ENCODE measurements at regions of chr12 and their contacts with region 1.

Region 1: GRCh38 chr12:63862214-63863107 is 18.0 kb downstream of the SRGAP1 start:
- DNase-seq: peak; percentile 76 to 83
- H3K4me3 ChIP-seq: no peak overlapping the region
- H3K4me3 Mint-ChIP-seq: peak overlapping the region; percentile 50
- H3K27ac Mint-ChIP-seq: peak overlapping the region; percentile 60
- H3K4me1 ChIP-seq: peaks cover 41% of the 10 kb centered on the region
- H3K4me1 Mint-ChIP-seq: peaks cover 14% of the 10 kb centered on the region
- H3K27me3 ChIP-seq: no peaks in the 10 kb centered on the region
- H3K27me3 Mint-ChIP-seq: no peaks in the 10 kb centered on the region
- CTCF ChIP-seq: no peak

Region 2: DNA sequence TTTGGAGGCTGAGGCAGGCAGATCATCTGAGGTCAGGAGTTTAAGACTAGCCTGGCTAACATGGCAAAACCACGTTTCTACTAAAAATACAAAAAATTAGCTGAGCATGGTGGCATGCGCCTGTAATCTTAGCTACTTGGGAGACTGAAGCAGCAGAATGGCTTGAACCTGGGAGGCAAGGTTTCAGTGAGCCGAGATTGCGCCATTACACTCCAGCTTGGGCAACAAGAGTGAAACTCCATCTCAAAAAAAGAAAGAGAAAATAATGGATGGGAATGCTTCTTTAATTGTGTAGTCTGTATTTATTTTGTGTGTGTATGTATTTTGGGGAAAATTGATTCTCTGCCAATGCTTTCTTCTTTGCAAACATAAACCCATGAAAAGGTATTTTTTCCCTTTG is 14.5 kb after region 1 on chr12:
- CTCF ChIA-PET with region 1: no interaction called
- POLR2A ChIA-PET with region 1: no interaction called
- intact Hi-C with region 1: loop called (anchors 1 kb)
- DNase-seq: no peak
- H3K4me3 ChIP-seq: no peak overlapping the region
- H3K4me3 Mint-ChIP-seq: no peak overlapping the region
- H3K27ac Mint-ChIP-seq: no peak overlapping the region
- H3K4me1 ChIP-seq: peaks cover 27% of the 10 kb centered on the region
- H3K4me1 Mint-ChIP-seq: peaks cover 18% of the 10 kb centered on the region
- H3K27me3 ChIP-seq: no peaks in the 10 kb centered on the region
- H3K27me3 Mint-ChIP-seq: no peaks in the 10 kb centered on the region
- CTCF ChIP-seq: no peak

Region 3: GRCh38 chr12:63917864-63918799 is 55.7 kb after region 1 on chr12:
- CTCF ChIA-PET with region 1: no interaction called
- POLR2A ChIA-PET with region 1: no interaction called
- intact Hi-C with region 1: loop called (anchors 1 kb)
- DNase-seq: peak; percentile 52 to 69
- H3K4me3 ChIP-seq: no peak overlapping the region
- H3K4me3 Mint-ChIP-seq: peak overlapping the region; percentile 8
- H3K27ac Mint-ChIP-seq: peak overlapping the region; percentile 77
- H3K4me1 ChIP-seq: peaks cover 74% of the 10 kb centered on the region
- H3K4me1 Mint-ChIP-seq: peaks cover 47% of the 10 kb centered on the region
- H3K27me3 ChIP-seq: no peaks in the 10 kb centered on the region
- H3K27me3 Mint-ChIP-seq: no peaks in the 10 kb centered on the region
- CTCF ChIP-seq: no peak